ENCODE measurements at regions of chr22 and their contacts with region 1.

Region 1: DNA sequence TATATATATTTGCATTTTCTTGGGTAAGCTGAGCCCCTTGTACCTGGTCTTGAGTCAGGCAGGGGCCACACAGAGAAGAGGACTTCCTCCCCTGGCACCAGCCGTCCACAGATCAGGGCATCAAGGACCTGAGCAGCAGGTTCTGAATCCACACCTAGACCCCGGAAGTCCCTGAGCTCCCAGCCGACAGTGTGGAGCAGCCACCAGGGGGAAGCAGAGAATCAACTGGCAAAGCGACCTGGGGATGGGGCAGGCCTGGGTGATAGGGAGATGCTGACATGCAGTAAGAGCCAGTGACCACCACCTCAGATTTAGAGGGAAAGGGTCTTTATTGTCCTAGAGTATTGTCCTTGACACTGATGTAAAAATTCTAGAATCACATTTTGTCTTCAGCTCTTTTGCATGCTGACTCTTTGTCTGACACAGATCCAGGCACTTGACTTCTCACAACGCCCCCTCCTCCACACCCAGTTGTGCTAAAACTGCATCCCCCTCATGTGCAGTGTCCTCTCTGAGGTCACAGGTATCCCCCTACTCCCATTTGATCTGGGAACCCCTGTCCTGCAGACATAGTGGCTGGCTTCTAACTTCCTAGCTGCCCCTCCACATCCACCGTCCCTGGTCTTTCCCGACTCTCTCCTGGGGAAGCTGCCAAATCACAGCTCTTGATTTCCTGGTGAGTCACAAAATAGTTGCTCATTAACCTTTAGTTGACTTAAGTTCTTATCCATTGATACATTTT is 109.3 kb downstream of the GGTLC2 start:
- DNase-seq: no peak
- ATAC-seq: peak; percentile 98
- H3K4me3 ChIP-seq: no peak overlapping the region
- H3K27ac ChIP-seq: no peak overlapping the region
- H3K4me1 ChIP-seq: no peaks in the 10 kb centered on the region
- H3K27me3 ChIP-seq: no peaks in the 10 kb centered on the region
- CTCF ChIP-seq: peak; percentile 38 to 76 (median 67); a peak in 5 of 6 replicates
- EP300 ChIP-seq: no peak
- POLR2A ChIP-seq: no peak
- RAD21 ChIP-seq: no peak

Region 2: GRCh38 chr22:22687638-22688500 is 65.8 kb before region 1 on chr22:
- CTCF ChIA-PET with region 1: interaction called, 11 read pairs
- POLR2A ChIA-PET with region 1: no interaction called
- RAD21 ChIA-PET with region 1: interaction called, 3 read pairs
- SMC1A ChIA-PET with region 1: no interaction called
- in situ Hi-C with region 1: no loop called
- intact Hi-C with region 1: no loop called
- DNase-seq: no peak
- ATAC-seq: peak; percentile 82
- H3K4me3 ChIP-seq: no peak overlapping the region
- H3K27ac ChIP-seq: no peak overlapping the region
- H3K4me1 ChIP-seq: peaks cover 32% of the 10 kb centered on the region
- H3K27me3 ChIP-seq: no peaks in the 10 kb centered on the region
- CTCF ChIP-seq: peak; percentile 64 to 69 (median 65); a peak in 5 of 6 replicates
- EP300 ChIP-seq: no peak
- POLR2A ChIP-seq: no peak
- RAD21 ChIP-seq: peak; percentile 38

Region 3: DNA sequence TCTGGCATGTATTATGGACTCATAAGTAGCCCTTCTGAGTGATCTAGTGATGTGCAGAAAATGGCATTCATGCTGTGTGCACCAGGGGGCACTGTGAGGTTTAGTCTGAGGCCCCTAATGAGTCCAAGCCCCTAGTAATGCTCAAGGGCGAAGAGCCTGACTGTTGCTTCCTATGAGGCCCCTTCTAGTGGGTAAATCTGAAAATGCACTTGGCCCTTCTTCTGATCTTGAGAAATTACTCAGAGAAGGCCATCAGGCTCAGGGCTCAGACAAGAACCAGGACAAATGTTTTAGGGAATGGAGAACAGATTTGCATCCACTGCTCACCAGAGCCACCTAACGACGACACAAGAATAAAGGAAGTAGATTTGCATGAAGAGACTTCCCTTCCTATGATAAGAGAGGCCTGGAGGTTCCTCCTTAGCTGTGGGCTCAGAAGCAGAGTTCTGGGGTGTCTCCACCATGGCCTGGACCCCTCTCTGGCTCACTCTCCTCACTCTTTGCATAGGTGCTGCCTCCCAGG is 33.4 kb before region 1 on chr22:
- CTCF ChIA-PET with region 1: interaction called, 31 read pairs
- POLR2A ChIA-PET with region 1: no interaction called
- RAD21 ChIA-PET with region 1: interaction called, 5 read pairs
- SMC1A ChIA-PET with region 1: interaction called, 6 read pairs
- in situ Hi-C with region 1: no loop called
- intact Hi-C with region 1: no loop called
- DNase-seq: peak; percentile 57
- ATAC-seq: peak; percentile 84
- H3K4me3 ChIP-seq: no peak overlapping the region
- H3K27ac ChIP-seq: peak overlapping the region; percentile 82
- H3K4me1 ChIP-seq: peaks cover 5% of the 10 kb centered on the region; the same call in 1 of the 2 replicates
- H3K27me3 ChIP-seq: no peaks in the 10 kb centered on the region
- CTCF ChIP-seq: peak; percentile 39 to 48 (median 46); a peak in 5 of 6 replicates
- EP300 ChIP-seq: no peak
- POLR2A ChIP-seq: no peak
- RAD21 ChIP-seq: no peak

Region 4: GRCh38 chr22:22770280-22770871 is 16.7 kb after region 1 on chr22:
- CTCF ChIA-PET with region 1: interaction called, 55 read pairs
- POLR2A ChIA-PET with region 1: no interaction called
- RAD21 ChIA-PET with region 1: interaction called, 5 read pairs
- SMC1A ChIA-PET with region 1: interaction called, 9 read pairs
- in situ Hi-C with region 1: no loop called
- intact Hi-C with region 1: no loop called
- DNase-seq: no peak
- ATAC-seq: peak; percentile 58
- H3K4me3 ChIP-seq: no peak overlapping the region
- H3K27ac ChIP-seq: no peak overlapping the region
- H3K4me1 ChIP-seq: no peaks in the 10 kb centered on the region
- H3K27me3 ChIP-seq: no peaks in the 10 kb centered on the region
- CTCF ChIP-seq: peak; percentile 29 to 61 (median 43); a peak in 4 of 6 replicates
- EP300 ChIP-seq: no peak
- POLR2A ChIP-seq: no peak
- RAD21 ChIP-seq: no peak

Region 5: GRCh38 chr22:22802339-22802970 is 48.8 kb after region 1 on chr22:
- CTCF ChIA-PET with region 1: interaction called, 6 read pairs
- POLR2A ChIA-PET with region 1: no interaction called
- RAD21 ChIA-PET with region 1: interaction called, 5 read pairs
- SMC1A ChIA-PET with region 1: interaction called, 5 read pairs
- in situ Hi-C with region 1: no loop called
- intact Hi-C with region 1: loop called (anchors 5 kb)
- DNase-seq: no peak
- ATAC-seq: peak; percentile 54
- H3K4me3 ChIP-seq: no peak overlapping the region
- H3K27ac ChIP-seq: no peak overlapping the region
- H3K4me1 ChIP-seq: no peaks in the 10 kb centered on the region
- H3K27me3 ChIP-seq: no peaks in the 10 kb centered on the region
- CTCF ChIP-seq: peak; percentile 19 to 39 (median 34); a peak in 4 of 6 replicates
- EP300 ChIP-seq: no peak
- POLR2A ChIP-seq: no peak
- RAD21 ChIP-seq: no peak